ENCODE measurements at regions of chr11 and their contacts with region 1.

Region 1: DNA sequence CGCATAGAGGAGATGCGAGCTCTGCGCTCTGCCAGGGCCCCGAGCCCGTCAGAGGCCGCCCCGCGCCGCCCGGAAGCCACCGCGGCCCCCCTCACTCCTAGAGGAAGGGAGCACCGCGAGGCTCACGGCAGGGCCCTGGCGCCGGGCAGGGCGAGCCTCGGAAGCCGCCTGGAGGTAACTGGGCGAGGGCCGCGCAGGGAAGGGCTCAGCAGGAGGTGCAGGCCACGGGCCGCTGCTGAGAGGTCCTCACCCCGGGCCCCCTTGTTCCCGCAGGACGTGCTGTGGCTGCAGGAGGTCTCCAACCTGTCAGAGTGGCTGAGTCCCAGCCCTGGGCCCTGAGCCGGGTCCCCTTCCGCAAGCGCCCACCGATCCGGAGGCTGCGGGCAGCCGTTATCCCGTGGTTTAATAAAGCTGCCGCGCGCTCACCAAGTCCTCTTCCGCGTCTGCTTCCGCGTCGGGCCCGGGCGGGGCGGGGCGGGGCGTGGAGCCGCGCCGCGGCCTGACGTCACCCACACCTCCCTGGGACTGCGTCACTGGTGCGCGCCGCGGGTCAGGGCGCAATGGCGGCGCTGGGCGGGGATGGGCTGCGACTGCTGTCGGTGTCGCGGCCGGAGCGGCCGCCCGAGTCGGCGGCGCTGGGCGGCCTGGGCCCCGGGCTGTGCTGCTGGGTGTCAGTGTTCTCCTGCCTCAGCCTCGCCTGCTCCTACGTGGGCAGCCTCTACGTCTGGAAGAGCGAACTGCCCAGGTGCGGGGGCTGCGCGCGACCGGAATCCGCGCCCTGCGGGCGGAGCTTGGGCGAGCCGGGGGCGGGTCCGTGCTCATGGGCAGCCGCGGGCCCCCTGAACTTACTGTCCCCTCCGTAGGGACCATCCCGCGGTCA is at the start of gene RCE1:
- DNase-seq: peak; percentile 86
- H3K4me3 Mint-ChIP-seq: peak within 1 kb of the TSS; percentile 82
- H3K27ac Mint-ChIP-seq: peak within 1 kb of the TSS; percentile 94
- H3K4me1 Mint-ChIP-seq: peaks cover 28% of the 10 kb centered on the region
- H3K27me3 Mint-ChIP-seq: no peaks in the 10 kb centered on the region
- CTCF ChIP-seq: no peak
- total RNA-seq, gene RCE1: 23.3 and 27.7 TPM in 2 replicates

Region 2: DNA sequence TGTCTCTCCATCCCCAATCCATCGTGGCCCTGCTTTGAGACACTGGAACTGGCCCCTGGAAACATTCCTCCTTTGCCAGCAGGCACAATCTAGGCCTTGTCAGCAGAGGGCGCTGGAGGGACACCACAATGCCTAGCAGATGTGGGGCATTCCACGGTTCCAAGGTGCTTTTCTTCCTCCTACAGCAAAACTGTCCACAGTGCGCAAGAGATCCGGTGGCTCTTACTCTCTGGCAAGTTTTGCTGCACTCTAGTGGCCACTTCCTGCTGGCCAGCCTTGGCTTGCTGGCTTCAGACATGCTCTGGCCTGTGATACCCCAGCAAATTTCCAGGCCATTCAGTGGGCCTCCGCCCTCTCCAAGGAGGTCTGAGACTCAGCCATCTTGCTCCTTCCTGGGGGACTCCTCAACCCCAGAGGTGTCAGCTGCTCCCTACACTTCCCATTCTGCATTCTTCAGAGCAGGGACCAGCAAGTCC is 148.4 kb before region 1 on chr11:
- CTCF ChIA-PET with region 1: interaction called, 14 read pairs
- POLR2A ChIA-PET with region 1: interaction called, 3 read pairs
- intact Hi-C with region 1: no loop called
- DNase-seq: peak; percentile 96
- H3K4me3 Mint-ChIP-seq: no peak overlapping the region
- H3K27ac Mint-ChIP-seq: peak overlapping the region; percentile 69
- H3K4me1 Mint-ChIP-seq: no peaks in the 10 kb centered on the region
- H3K27me3 Mint-ChIP-seq: no peaks in the 10 kb centered on the region
- CTCF ChIP-seq: peak; percentile 94

Region 3: DNA sequence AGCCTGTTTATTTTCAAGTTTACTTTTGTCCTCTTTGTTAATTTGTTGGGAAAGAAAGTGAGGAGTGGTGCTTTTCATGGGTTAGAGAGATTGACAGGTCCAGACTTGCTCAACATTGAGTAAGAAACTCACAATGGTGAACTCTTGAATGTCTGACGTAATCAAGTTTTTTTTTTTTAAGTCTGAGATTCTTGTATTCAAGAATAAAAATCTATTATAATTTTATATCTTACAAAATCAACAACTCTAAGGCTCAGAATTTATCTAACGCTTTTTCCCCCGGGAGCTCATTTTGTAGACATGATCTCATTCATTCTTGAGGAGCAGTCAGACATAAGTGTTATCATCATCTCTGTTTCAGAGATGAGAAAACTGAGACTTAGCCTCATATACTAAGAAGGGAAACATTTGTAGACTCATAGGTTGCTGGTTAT is 75.0 kb before region 1 on chr11:
- CTCF ChIA-PET with region 1: no interaction called
- POLR2A ChIA-PET with region 1: interaction called, 13 read pairs
- intact Hi-C with region 1: no loop called
- DNase-seq: peak; percentile 92
- H3K4me3 Mint-ChIP-seq: peak overlapping the region; percentile 53
- H3K27ac Mint-ChIP-seq: peak overlapping the region; percentile 90
- H3K4me1 Mint-ChIP-seq: peaks cover 38% of the 10 kb centered on the region
- H3K27me3 Mint-ChIP-seq: no peaks in the 10 kb centered on the region
- CTCF ChIP-seq: no peak

Region 4: GRCh38 chr11:66855574-66856495 is 12.7 kb after region 1 on chr11:
- CTCF ChIA-PET with region 1: interaction called, 3 read pairs
- POLR2A ChIA-PET with region 1: interaction called, 74 read pairs
- intact Hi-C with region 1: no loop called
- DNase-seq: peak; percentile 85
- H3K4me3 Mint-ChIP-seq: peak overlapping the region; percentile 86
- H3K27ac Mint-ChIP-seq: no peak overlapping the region
- H3K4me1 Mint-ChIP-seq: peaks cover 6% of the 10 kb centered on the region
- H3K27me3 Mint-ChIP-seq: no peaks in the 10 kb centered on the region
- CTCF ChIP-seq: no peak

Region 5: GRCh38 chr11:66970808-66971442 is 127.8 kb after region 1 on chr11:
- CTCF ChIA-PET with region 1: interaction called, 36 read pairs
- POLR2A ChIA-PET with region 1: interaction called, 13 read pairs
- intact Hi-C with region 1: loop called (anchors 1 kb)
- DNase-seq: peak; percentile 100
- H3K4me3 Mint-ChIP-seq: peak overlapping the region; percentile 7
- H3K27ac Mint-ChIP-seq: peak overlapping the region; percentile 87
- H3K4me1 Mint-ChIP-seq: peaks cover 56% of the 10 kb centered on the region
- H3K27me3 Mint-ChIP-seq: no peaks in the 10 kb centered on the region
- CTCF ChIP-seq: no peak

Region 6: GRCh38 chr11:66976048-66976467 is 132.9 kb after region 1 on chr11:
- CTCF ChIA-PET with region 1: interaction called, 36 read pairs
- POLR2A ChIA-PET with region 1: interaction called, 13 read pairs
- intact Hi-C with region 1: loop called (anchors 1 kb)
- DNase-seq: peak; percentile 35
- H3K4me3 Mint-ChIP-seq: no peak overlapping the region
- H3K27ac Mint-ChIP-seq: peak overlapping the region; percentile 66
- H3K4me1 Mint-ChIP-seq: peaks cover 20% of the 10 kb centered on the region
- H3K27me3 Mint-ChIP-seq: no peaks in the 10 kb centered on the region
- CTCF ChIP-seq: peak; percentile 79

Region 7: GRCh38 chr11:67022328-67022927 is 179.3 kb after region 1 on chr11:
- CTCF ChIA-PET with region 1: interaction called, 7 read pairs
- POLR2A ChIA-PET with region 1: interaction called, 5 read pairs
- intact Hi-C with region 1: loop called (anchors 5 kb)
- DNase-seq: peak; percentile 89
- H3K4me3 Mint-ChIP-seq: peak overlapping the region; percentile 56
- H3K27ac Mint-ChIP-seq: no peak overlapping the region
- H3K4me1 Mint-ChIP-seq: peaks cover 14% of the 10 kb centered on the region
- H3K27me3 Mint-ChIP-seq: no peaks in the 10 kb centered on the region
- CTCF ChIP-seq: no peak